CD8-positive, alpha-beta memory T cell (primary cell): ENCODE measurements at regions of chr6 and their contacts with region 1.

Region 1: DNA sequence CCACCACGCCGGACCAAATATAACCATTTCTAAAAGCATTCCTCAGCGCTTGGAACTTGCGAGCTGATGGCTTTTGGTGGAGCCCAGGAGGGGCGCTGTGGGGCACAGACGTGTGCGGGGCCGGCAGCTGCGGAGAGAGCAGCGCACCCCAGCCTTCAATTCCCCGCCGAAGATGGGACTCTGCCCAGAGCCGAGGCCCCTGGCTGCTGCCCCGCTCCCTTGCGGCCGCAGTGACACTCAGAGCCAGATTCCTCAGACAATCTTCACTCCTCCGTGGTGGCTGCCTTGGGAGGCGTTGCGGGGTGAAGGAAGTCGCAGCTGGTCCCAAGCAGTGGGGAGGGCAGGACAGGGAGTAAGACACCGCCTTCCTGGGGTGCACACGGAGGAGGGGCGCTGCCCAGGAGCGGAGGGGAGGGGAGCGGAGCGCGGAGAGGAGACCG is 87.7 kb downstream of the TMEM242 start:
- DNase-seq: peak; percentile 27 to 61 (median 36)
- H3K4me3 ChIP-seq: peak overlapping the region; percentile 62
- H3K4me3 Mint-ChIP-seq: peak overlapping the region; percentile 86 to 95 (median 91)
- H3K27ac ChIP-seq: no peak overlapping the region
- H3K27ac Mint-ChIP-seq: peak overlapping the region in 6 of 8 donors; percentile 40 to 83 (median 78)
- H3K4me1 ChIP-seq: peaks cover 12% of the 10 kb centered on the region
- H3K4me1 Mint-ChIP-seq: peaks cover 22 to 32% (median 30%) of the 10 kb centered on the region in 3 donors
- H3K27me3 ChIP-seq: no peaks in the 10 kb centered on the region
- H3K27me3 Mint-ChIP-seq: peaks cover 27 to 34% of the 10 kb centered on the region in 2 donors

Region 2: GRCh38 chr6:157223021-157223430 is 12.6 kb before region 1 on chr6:
- CTCF ChIA-PET with region 1: interaction called, 21 read pairs
- POLR2A ChIA-PET with region 1: no interaction called
- DNase-seq: peak in 1 of 5 donors; percentile 62
- H3K4me3 ChIP-seq: no peak overlapping the region
- H3K4me3 Mint-ChIP-seq: peak overlapping the region in 2 of 7 donors; percentile 62 to 85
- H3K27ac ChIP-seq: no peak overlapping the region
- H3K27ac Mint-ChIP-seq: peak overlapping the region in 2 of 8 donors; percentile 67 to 69
- H3K4me1 ChIP-seq: peaks cover 46% of the 10 kb centered on the region
- H3K4me1 Mint-ChIP-seq: peaks cover 40 to 50% (median 50%) of the 10 kb centered on the region in 3 donors
- H3K27me3 ChIP-seq: no peaks in the 10 kb centered on the region
- H3K27me3 Mint-ChIP-seq: peaks cover 0 to 5% of the 10 kb centered on the region in 2 donors

Region 3: GRCh38 chr6:157274471-157275226 is 39.0 kb after region 1 on chr6:
- CTCF ChIA-PET with region 1: interaction called, 16 read pairs
- POLR2A ChIA-PET with region 1: interaction called, 12 read pairs
- DNase-seq: peak; percentile 78 to 88 (median 85)
- H3K4me3 ChIP-seq: peak overlapping the region; percentile 76
- H3K4me3 Mint-ChIP-seq: peak overlapping the region; percentile 91 to 99 (median 92)
- H3K27ac ChIP-seq: peak overlapping the region; percentile 75
- H3K27ac Mint-ChIP-seq: peak overlapping the region; percentile 92 to 97 (median 95)
- H3K4me1 ChIP-seq: peaks cover 11% of the 10 kb centered on the region
- H3K4me1 Mint-ChIP-seq: peaks cover 12 to 14% (median 12%) of the 10 kb centered on the region in 3 donors
- H3K27me3 ChIP-seq: no peaks in the 10 kb centered on the region
- H3K27me3 Mint-ChIP-seq: peaks cover 0 to 3% of the 10 kb centered on the region in 2 donors